ENCODE measurements at regions of chr10 and their contacts with region 1.

Region 1: DNA sequence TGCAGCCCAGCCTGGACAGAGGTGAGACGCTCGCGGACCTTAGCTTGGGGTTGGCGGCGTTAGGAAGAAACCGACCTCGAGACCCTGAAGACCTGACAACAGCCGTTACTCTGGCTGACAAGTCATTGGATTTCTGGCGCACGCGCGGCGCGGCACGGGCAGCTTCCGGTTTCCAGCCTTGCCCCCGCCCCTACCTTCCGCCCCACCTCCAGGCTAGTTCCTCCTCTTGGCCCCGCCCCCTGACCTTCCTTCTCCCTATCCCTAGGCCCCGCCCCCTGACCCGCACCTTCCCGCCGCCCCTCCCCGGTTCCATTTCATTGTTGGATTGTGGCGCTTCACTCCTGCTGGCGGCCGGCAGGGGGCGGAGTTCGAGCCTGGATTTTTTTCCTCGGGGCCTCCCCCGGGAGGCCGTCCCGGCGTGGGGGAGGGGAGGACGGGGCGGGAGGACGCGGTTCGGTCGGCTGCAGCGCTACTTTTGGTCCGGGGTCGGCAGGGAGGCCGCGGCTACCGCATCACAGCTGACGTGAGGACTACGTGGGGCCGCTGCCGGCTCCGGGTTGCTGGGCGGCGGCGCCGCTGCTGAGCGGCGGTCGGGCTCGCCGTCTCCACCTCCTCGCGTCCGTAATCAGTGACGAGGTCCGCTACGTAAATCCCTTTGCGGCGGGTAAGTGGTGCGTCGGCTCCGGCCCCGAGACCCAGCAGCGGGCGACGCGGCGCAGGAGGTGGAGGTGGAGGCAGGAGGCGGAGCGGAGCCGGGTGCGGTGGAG is at the start of gene CREM:
- DNase-seq: peak; percentile 99 to 100
- ATAC-seq: peak; percentile 90 to 93
- H3K4me3 ChIP-seq: peak within 1 kb of the TSS; percentile 68 to 89 (median 82)
- H3K27ac ChIP-seq: peak within 1 kb of the TSS; percentile 93 to 98 (median 96)
- H3K4me1 ChIP-seq: peaks cover 26 to 27% of the 10 kb centered on the region in 2 donors
- H3K27me3 ChIP-seq: no peaks in the 10 kb centered on the region
- CTCF ChIP-seq: peak; percentile 78 to 97 (median 93)
- POLR2A ChIP-seq: peak; percentile 99
- total RNA-seq, gene CREM: 24.3 to 42.5 (median 30.1) TPM

Region 2: DNA sequence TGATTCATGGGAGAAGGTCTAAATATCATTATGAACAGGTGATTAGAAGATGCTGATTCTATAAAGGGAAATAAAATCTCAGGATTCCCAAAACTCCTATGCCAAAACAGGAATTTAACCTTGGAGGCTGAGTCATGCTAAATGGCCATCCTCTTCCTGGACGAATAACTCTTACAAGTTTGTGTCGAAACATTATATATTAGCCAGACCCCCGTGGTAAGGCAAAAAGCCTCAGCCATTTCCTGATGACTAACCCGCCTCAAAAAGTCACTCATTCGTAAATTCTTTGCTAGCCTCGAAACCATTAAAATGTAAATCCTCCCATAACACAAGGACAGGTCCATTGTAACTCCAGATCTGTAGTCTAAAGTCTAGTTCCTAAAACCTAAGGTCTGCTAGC is 68.6 kb before region 1 on chr10:
- in situ Hi-C with region 1: no loop called
- intact Hi-C with region 1: no loop called
- DNase-seq: no peak
- ATAC-seq: no peak
- H3K4me3 ChIP-seq: no peak overlapping the region
- H3K27ac ChIP-seq: no peak overlapping the region
- H3K4me1 ChIP-seq: no peaks in the 10 kb centered on the region
- H3K27me3 ChIP-seq: no peaks in the 10 kb centered on the region
- CTCF ChIP-seq: no peak
- POLR2A ChIP-seq: no peak

Region 3: DNA sequence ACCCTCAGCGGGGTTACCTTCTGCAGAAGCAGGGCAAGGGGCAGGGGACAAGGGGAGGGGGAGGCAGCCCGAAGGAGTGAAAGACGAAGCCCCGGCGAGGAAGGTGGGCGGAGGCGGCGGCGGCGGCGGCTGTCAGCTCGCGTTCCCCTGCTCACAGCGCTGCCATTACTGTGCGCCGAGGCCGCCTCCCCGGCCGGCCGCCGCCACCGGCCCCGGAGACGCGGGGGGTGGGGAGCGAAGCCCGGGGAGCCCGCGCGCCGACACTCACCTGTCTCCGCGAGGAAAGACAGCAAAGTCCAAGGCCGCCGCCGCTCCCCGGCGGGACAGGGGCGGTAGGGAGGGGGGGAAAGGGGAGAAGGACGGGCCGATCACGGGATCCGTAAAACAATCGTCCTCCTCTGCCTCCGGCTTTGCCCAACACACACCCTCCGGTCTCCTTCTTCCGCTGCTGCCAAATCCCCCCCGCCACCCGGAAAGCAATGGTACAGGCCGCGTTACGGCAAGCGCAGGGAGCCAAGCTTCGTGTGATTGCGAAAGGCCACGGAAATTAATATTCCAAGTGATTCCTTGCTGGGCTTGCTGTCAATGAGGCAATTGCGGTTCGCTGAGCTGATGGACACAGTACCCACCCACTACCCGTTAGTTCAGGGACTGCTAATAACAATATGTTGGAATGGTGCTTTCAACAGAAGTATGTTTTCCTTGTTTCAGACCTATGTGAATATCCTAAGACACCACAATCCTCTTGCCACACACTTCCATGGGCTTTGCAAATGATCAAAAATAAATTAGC is 36.4 kb before region 1 on chr10 and contains the start of gene CUL2:
- in situ Hi-C with region 1: no loop called
- intact Hi-C with region 1: loop called (anchors 1 kb)
- DNase-seq: peak; percentile 82 to 90
- ATAC-seq: peak; percentile 95 to 98
- H3K4me3 ChIP-seq: peak within 1 kb of the TSS; percentile 96 to 99 (median 98)
- H3K27ac ChIP-seq: peak within 1 kb of the TSS; percentile 93 to 98 (median 97)
- H3K4me1 ChIP-seq: peaks cover 37 to 38% of the 10 kb centered on the region in 2 donors
- H3K27me3 ChIP-seq: no peaks in the 10 kb centered on the region
- CTCF ChIP-seq: no peak
- POLR2A ChIP-seq: peak; percentile 16 to 24
- total RNA-seq, gene CUL2: 27.2 to 41.4 (median 34.2) TPM

Region 4: DNA sequence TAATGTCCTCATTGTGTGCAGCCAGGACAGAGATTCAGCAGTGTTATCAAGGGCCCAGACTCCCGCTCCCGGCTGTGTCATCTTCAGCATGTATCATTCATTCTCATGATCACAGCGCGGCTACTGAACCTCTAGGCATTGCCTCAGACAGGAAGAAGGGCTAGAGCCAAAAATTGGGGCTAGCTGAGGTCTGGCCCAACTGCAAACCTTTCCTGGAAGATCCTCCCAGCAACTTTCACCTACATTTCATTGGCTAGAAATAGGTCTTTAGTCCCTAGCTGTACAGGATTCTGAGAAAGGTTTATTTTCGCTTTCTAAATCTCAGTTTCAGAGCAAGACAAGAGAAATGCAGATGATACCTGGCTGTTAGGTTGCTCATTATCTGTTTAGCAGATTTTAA is 81.8 kb after region 1 on chr10:
- in situ Hi-C with region 1: no loop called
- intact Hi-C with region 1: loop called (anchors 2 kb)
- DNase-seq: peak; percentile 29 to 64
- ATAC-seq: peak; percentile 85 to 91
- H3K4me3 ChIP-seq: peak overlapping the region; percentile 22 to 43 (median 38)
- H3K27ac ChIP-seq: peak overlapping the region; percentile 78 to 88 (median 82)
- H3K4me1 ChIP-seq: peaks cover 18 to 19% of the 10 kb centered on the region in 2 donors
- H3K27me3 ChIP-seq: no peaks in the 10 kb centered on the region
- CTCF ChIP-seq: no peak
- POLR2A ChIP-seq: no peak

Region 5: GRCh38 chr10:35336084-35336831 is 209.5 kb after region 1 on chr10 and contains the start of gene CCNY:
- in situ Hi-C with region 1: loop called in 1 of 4 experiments (anchors 25 kb)
- intact Hi-C with region 1: loop called (anchors 5 kb)
- DNase-seq: peak; percentile 48 to 65
- ATAC-seq: peak; percentile 64 to 71
- H3K4me3 ChIP-seq: peak within 1 kb of the TSS; percentile 89 to 98 (median 94)
- H3K27ac ChIP-seq: peak within 1 kb of the TSS; percentile 87 to 98 (median 96)
- H3K4me1 ChIP-seq: peaks cover 71 to 82% of the 10 kb centered on the region in 2 donors
- H3K27me3 ChIP-seq: no peaks in the 10 kb centered on the region
- CTCF ChIP-seq: no peak
- POLR2A ChIP-seq: peak; percentile 88
- total RNA-seq, gene CCNY: 23.9 to 68.1 (median 39.5) TPM

Region 6: GRCh38 chr10:35554461-35555056 is 427.8 kb after region 1 on chr10:
- in situ Hi-C with region 1: loop called in 1 of 4 experiments (anchors 25 kb)
- intact Hi-C with region 1: loop called (anchors 10 kb)
- DNase-seq: peak; percentile 31 to 35
- ATAC-seq: peak; percentile 87 to 88
- H3K4me3 ChIP-seq: no peak overlapping the region
- H3K27ac ChIP-seq: peak overlapping the region; percentile 28 to 72 (median 50)
- H3K4me1 ChIP-seq: peaks cover 28 to 41% of the 10 kb centered on the region in 2 donors
- H3K27me3 ChIP-seq: no peaks in the 10 kb centered on the region
- CTCF ChIP-seq: no peak
- POLR2A ChIP-seq: no peak

Measured in gastrocnemius medialis (tissue), 4 donors.